WTC11 (cell line): ENCODE measurements at regions of chr1 and their contacts with region 1.

Region 1: GRCh38 chr1:24502709-24503058 is at the start of gene RCAN3:
- DNase-seq: peak; percentile 88
- ATAC-seq: peak; percentile 85
- H3K4me3 Mint-ChIP-seq: peak within 1 kb of the TSS; percentile 86
- H3K27ac Mint-ChIP-seq: peak within 1 kb of the TSS; percentile 78
- H3K4me1 Mint-ChIP-seq: peaks cover 54% of the 10 kb centered on the region
- H3K27me3 Mint-ChIP-seq: peaks cover 11% of the 10 kb centered on the region
- CTCF ChIP-seq: no peak
- total RNA-seq, gene RCAN3: 16.9 to 23.3 TPM (median 16.9 TPM) in 3 replicates

Region 2: GRCh38 chr1:24463776-24464735 is 38.6 kb before region 1 on chr1:
- CTCF ChIA-PET with region 1: interaction called, 14 read pairs
- POLR2A ChIA-PET with region 1: no interaction called
- DNase-seq: peak; percentile 54
- ATAC-seq: peak; percentile 96
- H3K4me3 Mint-ChIP-seq: peak overlapping the region; percentile 54
- H3K27ac Mint-ChIP-seq: peak overlapping the region; percentile 98
- H3K4me1 Mint-ChIP-seq: peaks cover 51% of the 10 kb centered on the region
- H3K27me3 Mint-ChIP-seq: no peaks in the 10 kb centered on the region
- CTCF ChIP-seq: no peak